Tibial artery (tissue), 4 donors: ENCODE measurements at regions of chr9 and their contacts with region 1.

Region 1: GRCh38 chr9:121222524-121223171 is 21.0 kb upstream of the RAB14 start:
- DNase-seq: no peak
- H3K4me3 ChIP-seq: no peak overlapping the region
- H3K27ac ChIP-seq: no peak overlapping the region
- H3K4me1 ChIP-seq: peaks cover 0 to 4% (median 0%) of the 10 kb centered on the region in 4 donors
- H3K27me3 ChIP-seq: no peaks in the 10 kb centered on the region
- CTCF ChIP-seq: peak; percentile 67 to 72

Region 2: DNA sequence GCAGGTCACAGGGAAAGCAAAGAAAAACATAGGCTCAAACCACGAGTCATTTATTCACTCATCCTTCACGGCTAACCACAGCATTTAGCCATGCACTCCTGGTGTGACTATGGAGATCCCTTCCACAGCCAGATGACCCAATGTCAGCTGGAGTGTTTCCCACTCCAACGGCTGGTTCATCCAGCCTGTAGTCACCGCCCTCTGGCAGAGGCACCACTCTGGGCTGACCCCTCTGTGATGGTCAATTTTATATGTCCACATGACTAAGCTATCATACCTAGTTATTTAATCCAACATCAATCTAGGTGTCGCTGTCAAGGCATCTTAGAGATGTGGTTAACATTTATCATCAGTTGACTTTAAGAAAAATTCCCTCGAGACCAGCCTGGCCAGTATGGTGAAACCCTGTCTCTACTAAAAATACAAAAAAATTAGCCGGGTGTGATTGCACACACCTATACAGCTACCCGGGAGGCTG is 336.1 kb before region 1 on chr9:
- intact Hi-C with region 1: no loop called
- DNase-seq: peak in 1 of 2 donors; percentile 74
- H3K4me3 ChIP-seq: no peak overlapping the region
- H3K27ac ChIP-seq: no peak overlapping the region
- H3K4me1 ChIP-seq: no peaks in the 10 kb centered on the region
- H3K27me3 ChIP-seq: no peaks in the 10 kb centered on the region
- CTCF ChIP-seq: no peak

Region 3: GRCh38 chr9:120916588-120916987 is 306.1 kb before region 1 on chr9:
- intact Hi-C with region 1: no loop called
- DNase-seq: peak; percentile 86 to 94
- H3K4me3 ChIP-seq: no peak overlapping the region
- H3K27ac ChIP-seq: peak overlapping the region; percentile 94
- H3K4me1 ChIP-seq: peaks cover 8 to 79% (median 61%) of the 10 kb centered on the region in 4 donors
- H3K27me3 ChIP-seq: no peaks in the 10 kb centered on the region
- CTCF ChIP-seq: peak in 1 of 2 experiments; percentile 32

Region 4: DNA sequence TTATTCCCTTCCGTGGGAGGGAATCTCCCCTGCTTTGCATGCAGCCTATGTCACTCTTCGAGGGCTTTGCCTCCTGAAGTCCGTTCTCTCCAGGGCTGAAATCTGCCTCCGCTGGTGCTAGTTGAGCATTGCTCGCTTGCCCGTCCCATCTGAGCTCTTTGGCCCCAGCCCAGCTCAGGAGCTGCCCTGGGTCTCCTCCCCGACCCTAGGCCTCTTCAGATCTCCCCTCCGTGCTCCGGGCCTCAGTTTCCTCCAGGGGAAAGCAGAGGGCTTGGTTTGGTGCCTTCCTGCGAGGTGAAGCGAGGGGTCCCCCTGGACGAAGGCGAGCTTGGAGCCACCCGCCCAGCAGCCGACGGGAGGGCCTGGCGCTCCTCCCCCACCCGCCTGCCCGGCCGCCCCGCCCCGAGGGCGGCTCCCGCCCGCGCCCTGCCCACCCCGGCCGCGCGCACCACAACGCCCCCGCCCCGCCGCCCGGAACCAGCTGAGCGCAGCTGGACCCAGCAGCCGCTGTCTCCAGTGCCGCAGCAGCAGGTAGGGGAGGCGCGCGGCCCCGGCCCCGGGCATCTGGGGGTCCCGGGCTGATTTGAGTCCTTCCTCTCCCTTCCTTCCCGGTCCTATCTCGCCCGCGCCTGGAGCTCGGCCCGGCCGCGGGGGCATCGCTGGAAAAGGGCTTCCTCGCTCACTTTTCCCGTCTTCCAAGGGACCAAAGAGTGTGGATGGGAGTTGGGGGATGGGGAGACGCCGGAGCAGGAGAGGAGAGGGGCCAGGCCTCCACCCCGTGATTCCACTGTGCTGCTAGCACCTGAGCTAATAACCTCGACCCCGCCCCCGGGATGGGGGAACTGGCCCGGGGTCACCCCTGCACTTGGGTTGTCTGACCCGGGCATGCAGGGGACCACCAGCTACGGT is 45.3 kb after region 1 on chr9 and contains the start of gene GSN:
- intact Hi-C with region 1: loop called (anchors 5 kb)
- DNase-seq: peak; percentile 82 to 92
- H3K4me3 ChIP-seq: peak within 1 kb of the TSS; percentile 84 to 91
- H3K27ac ChIP-seq: peak within 1 kb of the TSS; percentile 92 to 95
- H3K4me1 ChIP-seq: peaks cover 0 to 46% (median 40%) of the 10 kb centered on the region in 4 donors
- H3K27me3 ChIP-seq: no peaks in the 10 kb centered on the region
- CTCF ChIP-seq: peak; percentile 21 to 33

Region 5: GRCh38 chr9:121305269-121305994 is 82.8 kb after region 1 on chr9:
- intact Hi-C with region 1: loop called (anchors 5 kb)
- DNase-seq: peak; percentile 89 to 92
- H3K4me3 ChIP-seq: no peak overlapping the region
- H3K27ac ChIP-seq: peak overlapping the region; percentile 92 to 95
- H3K4me1 ChIP-seq: peaks cover 0 to 85% (median 60%) of the 10 kb centered on the region in 4 donors
- H3K27me3 ChIP-seq: no peaks in the 10 kb centered on the region
- CTCF ChIP-seq: no peak

Region 6: GRCh38 chr9:121399883-121400607 is 177.4 kb after region 1 on chr9:
- intact Hi-C with region 1: loop called (anchors 5 kb)
- DNase-seq: no peak
- H3K4me3 ChIP-seq: no peak overlapping the region
- H3K27ac ChIP-seq: no peak overlapping the region
- H3K4me1 ChIP-seq: no peaks in the 10 kb centered on the region
- H3K27me3 ChIP-seq: no peaks in the 10 kb centered on the region
- CTCF ChIP-seq: peak; percentile 70 to 85